Right ventricle myocardium superior (tissue), 1 donor: ENCODE measurements at regions of chr9 and their contacts with region 1.

Region 1: DNA sequence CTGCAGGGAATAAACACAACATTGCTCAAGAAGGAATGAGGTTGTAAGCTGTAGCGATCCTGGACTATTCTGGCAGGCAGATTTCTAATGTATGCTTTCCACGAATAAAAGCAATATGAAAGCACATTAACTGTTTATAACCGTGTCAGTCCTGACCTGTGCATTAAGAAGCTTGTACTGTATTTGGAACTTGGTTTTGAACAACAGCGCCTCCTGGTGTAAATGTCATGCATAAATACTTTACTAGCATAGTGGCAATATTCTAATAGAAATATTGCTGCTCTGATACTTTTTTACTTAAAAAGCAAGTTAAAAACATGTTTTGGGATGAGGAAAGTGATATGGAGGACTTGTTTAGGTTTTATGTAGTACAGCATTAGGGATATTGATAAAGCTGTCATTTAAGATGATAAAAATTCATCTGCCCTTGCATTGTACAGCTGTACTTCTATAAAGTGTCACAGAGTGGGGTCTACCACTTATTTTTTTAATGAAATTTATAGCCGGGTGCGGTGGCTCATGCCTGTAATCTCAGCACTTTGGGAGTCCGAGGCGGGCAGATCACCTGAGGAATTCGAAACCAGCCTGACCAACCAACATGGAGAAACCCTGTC is 70.7 kb upstream of the GNE start:
- DNase-seq: no peak
- ATAC-seq: peak; percentile 74

Region 2: GRCh38 chr9:36258208-36258988 is 70.5 kb before region 1 on chr9 and contains the start of gene GNE:
- intact Hi-C with region 1: loop called (anchors 5 kb)
- DNase-seq: peak; percentile 99
- ATAC-seq: peak; percentile 99
- total RNA-seq, gene GNE: 12.4 TPM